GM18951 (cell line): ENCODE measurements at regions of chr7 and their contacts with region 1.

Region 1: DNA sequence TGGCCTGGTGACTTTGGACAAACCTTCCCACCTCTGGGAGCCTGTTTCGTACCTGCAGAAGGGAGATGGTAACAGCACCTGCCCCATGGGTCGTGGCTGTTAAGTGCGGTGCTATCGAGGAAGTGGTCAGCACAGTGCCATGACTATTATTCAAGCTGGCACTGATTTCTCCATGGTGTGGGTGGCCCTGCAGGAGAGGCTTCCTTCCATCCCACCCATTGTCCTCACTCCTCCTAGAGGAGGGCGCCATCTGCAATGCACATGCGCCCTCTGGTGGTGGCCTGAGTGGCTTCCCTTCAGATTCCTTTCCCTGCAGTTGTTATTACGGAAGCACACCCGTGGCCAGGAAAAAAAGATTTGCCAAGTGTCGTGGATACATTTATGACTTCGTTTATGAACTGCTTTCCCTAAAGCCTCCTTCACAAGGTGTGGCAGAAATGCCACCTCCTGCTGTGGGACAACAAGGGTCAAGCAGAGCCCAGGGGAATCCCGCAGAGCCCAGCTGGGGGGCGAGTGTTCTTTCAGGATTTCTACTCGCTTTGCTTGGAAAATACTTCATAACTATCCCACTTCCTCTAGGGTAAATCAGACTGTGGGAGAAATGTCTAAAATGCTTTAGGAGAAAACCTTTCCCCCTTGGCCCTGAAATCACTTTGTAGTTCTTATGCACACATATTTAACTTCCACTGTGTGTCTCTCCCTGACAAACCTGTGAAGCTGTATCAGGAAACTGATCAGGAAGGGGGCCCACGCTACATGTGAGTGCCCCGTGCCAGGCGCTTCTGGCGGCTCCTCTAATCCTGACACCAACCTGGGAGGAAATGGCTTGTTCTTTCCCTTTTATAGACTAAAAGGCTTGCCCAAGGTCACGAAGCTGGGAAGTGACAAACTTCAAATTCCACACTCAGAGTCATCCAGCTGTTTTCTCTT is 98.0 kb upstream of the ANLN start:
- POLR2A ChIP-seq: no peak

Region 2: GRCh38 chr7:35630024-35630972 is 661.4 kb before region 1 on chr7:
- in situ Hi-C with region 1: no loop called
- POLR2A ChIP-seq: no peak

Region 3: GRCh38 chr7:35985126-35985754 is 306.4 kb before region 1 on chr7:
- in situ Hi-C with region 1: loop called (anchors 10 kb)
- POLR2A ChIP-seq: no peak

Region 4: DNA sequence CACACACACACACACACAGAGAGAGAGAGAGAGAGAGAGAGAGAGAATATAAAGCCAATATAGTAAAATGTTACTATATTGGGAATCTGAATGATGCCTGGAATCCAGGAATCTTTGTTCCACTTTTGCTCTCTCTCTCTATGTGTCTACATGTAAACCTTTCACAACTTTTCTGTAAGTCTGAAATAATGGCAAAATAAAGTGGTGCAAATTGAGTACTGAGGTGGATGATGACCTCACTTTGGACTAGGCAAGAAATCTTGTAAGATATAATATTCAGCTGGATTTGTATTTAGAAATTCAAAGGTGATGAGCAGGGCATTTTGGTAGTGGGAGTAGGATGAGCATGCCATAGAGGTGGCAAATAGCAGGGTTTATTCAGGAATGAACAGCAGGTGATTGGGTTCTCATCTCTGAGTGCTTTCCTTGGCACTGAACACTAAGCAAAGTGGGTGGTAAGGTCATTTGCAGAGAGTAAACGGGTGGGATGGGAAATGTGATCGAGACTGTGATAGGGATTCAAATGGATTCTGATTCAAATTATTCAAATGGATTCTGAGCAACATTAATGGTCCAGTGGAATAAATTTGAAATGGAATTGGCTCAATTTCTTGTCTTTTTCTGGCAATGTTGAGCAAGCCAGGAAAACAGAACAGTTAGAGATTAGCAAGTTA is 88.3 kb after region 1 on chr7:
- in situ Hi-C with region 1: no loop called
- POLR2A ChIP-seq: no peak